ENCODE measurements at regions of chr16 and their contacts with region 1.

Region 1: DNA sequence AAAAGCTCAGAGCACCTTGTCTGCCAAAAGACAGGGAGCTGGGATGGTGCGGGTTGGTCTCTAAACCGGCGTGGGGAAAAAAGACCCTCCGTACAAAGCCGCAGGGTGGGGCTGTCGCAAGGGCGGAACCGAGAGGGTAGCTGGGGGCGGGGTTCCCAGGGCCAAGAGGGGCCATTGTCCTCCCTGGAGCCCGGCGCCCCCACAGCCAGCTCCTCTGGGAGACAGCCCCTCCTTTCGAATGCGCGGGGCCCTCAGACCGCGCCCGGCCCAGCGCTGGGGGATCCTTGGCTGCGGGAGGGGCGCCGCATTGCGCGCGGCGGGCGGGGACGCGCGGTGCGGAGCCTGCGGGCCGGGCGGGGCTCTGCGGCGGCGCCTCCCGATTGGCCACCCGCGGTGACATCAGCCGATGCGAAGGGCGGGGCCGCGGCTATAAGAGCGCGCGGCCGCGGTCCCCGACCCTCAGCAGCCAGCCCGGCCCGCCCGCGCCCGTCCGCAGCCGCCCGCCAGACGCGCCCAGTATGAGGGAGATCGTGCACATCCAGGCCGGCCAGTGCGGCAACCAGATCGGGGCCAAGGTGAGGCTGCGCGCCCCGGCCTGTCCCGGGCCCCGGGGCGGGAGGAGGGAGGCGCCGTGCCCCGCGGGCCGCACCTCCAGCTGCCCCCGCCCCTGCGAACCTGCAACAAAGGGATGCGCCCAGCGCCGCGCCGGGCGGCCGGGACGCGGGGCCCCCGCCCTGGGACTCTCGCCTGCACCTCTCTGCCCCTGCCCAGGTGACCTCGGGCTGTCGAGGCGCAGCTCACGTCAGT is at the start of gene TUBB3:
- DNase-seq: peak; percentile 92
- H3K4me3 Mint-ChIP-seq: peak within 1 kb of the TSS; percentile 83
- H3K27ac Mint-ChIP-seq: peak within 1 kb of the TSS; percentile 10
- H3K4me1 Mint-ChIP-seq: peaks cover 25% of the 10 kb centered on the region
- H3K27me3 Mint-ChIP-seq: peaks cover 19% of the 10 kb centered on the region
- total RNA-seq, gene TUBB3: 2.2 and 2.6 TPM in 2 replicates

Region 2: DNA sequence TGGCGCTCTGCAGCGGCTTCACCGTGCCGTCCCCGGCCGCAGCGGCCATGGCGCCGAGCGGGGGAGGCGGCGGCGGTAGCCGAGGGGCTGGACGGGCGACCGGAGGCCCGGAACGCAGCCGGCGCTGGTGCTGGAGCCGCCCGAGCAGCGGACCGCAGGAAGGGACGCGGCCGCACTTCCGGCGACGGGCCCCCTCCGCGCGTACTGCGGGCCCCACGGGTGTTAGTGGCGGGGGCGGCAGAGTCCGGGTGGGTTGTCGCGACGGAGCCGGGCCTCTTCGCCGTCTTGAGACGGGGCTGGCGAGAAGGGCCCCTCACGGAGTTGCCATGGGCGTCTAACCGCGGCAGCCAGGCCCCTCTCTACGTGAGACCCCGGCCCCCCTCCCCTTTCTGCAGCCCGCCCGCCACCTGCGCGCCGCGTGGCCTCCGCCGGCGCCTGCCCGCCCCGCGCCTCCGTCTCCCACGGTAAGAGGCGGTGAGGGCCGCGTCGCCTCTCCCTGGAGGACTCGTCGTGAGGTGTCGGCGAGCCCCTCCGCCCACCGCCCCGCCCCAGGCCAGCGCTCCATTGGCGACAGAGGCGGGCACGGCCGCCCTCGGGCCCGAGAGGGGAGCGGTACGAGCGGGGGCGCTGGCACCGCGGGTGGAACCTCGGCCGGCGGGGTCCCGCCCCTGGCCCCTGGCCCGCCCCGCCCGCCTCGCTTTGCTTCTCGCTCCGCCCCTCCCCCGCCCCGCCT is 202.1 kb before region 1 on chr16 and contains the starts of genes VPS9D1 and ZNF276:
- intact Hi-C with region 1: loop called (anchors 5 kb)
- DNase-seq: peak; percentile 94
- H3K4me3 Mint-ChIP-seq: peak within 1 kb of the TSS; percentile 90
- H3K27ac Mint-ChIP-seq: peak within 1 kb of the TSS; percentile 92
- H3K4me1 Mint-ChIP-seq: peaks cover 37% of the 10 kb centered on the region
- H3K27me3 Mint-ChIP-seq: no peaks in the 10 kb centered on the region
- total RNA-seq, gene VPS9D1: 3.6 and 3.9 TPM in 2 replicates
- total RNA-seq, gene ZNF276: 32.9 and 33.3 TPM in 2 replicates

Region 3: DNA sequence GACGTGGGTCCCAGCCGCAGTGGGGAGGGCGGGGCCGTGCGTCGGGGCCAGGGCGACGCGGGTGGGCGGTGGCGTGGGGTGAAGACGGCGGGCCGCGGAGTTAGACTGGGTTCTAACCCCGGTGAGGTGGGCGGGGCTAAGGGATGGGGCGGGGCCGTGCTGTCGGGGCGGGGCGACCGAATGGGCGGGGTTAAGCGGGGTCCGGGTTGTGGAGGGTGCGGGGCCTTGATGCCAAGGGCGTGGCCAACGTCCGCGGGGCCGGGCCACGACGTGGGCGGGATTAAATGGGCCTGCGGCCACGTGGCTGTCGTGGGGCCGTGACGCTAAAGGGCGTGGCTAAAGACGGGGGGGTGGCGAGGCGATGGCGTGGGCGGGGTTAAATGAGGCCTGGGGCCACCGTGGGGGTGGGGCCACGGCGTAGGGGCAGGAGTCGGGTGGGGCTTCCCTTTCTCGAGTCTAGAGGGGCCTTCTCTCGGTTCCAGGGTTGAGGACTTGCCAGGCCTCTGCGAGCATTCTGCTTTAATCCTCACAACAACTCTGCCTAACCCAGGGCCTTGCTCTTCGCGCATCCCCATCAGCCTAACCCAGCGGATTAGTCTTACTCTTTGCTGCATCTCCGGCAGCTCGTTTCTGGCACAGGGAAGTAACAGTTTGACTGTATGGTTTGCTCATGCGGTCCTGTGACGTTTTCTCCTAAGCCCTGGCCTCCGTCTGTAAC is 49.0 kb before region 1 on chr16:
- intact Hi-C with region 1: loop called (anchors 5 kb)
- DNase-seq: peak; percentile 97
- H3K4me3 Mint-ChIP-seq: peak overlapping the region; percentile 92
- H3K27ac Mint-ChIP-seq: peak overlapping the region; percentile 98
- H3K4me1 Mint-ChIP-seq: peaks cover 13% of the 10 kb centered on the region
- H3K27me3 Mint-ChIP-seq: no peaks in the 10 kb centered on the region

Region 4: DNA sequence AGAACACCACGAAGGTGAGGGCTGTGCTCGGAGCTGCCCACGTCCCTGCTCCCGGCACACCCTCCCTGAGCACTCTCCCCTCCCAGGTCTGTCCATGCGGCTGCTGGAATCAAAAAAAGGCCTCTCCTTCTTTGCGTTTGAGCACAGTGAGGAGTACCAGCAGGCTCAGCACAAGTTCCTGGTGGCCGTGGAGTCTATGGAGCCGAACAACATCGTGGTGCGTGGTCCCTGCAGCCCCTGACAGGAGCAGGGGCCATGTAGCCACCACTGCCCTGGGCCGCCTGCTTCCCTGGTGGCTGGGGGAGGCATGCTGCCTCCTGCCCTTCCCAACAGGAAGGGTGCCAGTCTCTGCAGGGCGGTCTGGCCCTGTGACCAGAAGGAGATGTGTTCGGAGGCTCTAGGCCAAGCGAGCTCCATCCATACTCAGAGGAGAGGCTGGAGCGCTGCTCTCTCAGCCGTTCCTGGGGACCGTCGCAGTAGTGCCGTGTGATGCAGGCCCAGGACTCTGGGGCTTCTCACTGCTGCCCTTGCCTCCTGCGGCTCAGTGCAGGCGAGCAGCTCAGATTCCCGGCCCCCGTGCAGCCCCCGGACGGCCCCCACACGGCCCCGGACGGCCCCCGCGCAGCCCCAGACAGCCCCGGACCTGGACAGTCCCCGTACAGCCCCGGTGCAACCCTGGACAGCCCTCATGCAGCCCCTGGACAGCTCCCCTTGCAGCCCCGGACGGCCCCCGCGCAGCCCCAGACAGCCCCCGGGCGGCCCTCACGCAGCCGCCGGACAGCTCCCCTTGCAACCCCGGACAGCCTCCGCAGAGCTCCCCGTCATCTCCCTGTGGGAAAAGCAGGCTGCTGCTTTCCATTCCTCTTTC is 29.2 kb before region 1 on chr16:
- intact Hi-C with region 1: no loop called
- DNase-seq: no peak
- H3K4me3 Mint-ChIP-seq: no peak overlapping the region
- H3K27ac Mint-ChIP-seq: no peak overlapping the region
- H3K4me1 Mint-ChIP-seq: peaks cover 8% of the 10 kb centered on the region
- H3K27me3 Mint-ChIP-seq: no peaks in the 10 kb centered on the region

Region 5: GRCh38 chr16:89945670-89946069 is 22.6 kb after region 1 on chr16:
- intact Hi-C with region 1: loop called (anchors 1 kb)
- DNase-seq: no peak
- H3K4me3 Mint-ChIP-seq: no peak overlapping the region
- H3K27ac Mint-ChIP-seq: no peak overlapping the region
- H3K4me1 Mint-ChIP-seq: peaks cover 7% of the 10 kb centered on the region
- H3K27me3 Mint-ChIP-seq: peaks cover 35% of the 10 kb centered on the region

Region 6: DNA sequence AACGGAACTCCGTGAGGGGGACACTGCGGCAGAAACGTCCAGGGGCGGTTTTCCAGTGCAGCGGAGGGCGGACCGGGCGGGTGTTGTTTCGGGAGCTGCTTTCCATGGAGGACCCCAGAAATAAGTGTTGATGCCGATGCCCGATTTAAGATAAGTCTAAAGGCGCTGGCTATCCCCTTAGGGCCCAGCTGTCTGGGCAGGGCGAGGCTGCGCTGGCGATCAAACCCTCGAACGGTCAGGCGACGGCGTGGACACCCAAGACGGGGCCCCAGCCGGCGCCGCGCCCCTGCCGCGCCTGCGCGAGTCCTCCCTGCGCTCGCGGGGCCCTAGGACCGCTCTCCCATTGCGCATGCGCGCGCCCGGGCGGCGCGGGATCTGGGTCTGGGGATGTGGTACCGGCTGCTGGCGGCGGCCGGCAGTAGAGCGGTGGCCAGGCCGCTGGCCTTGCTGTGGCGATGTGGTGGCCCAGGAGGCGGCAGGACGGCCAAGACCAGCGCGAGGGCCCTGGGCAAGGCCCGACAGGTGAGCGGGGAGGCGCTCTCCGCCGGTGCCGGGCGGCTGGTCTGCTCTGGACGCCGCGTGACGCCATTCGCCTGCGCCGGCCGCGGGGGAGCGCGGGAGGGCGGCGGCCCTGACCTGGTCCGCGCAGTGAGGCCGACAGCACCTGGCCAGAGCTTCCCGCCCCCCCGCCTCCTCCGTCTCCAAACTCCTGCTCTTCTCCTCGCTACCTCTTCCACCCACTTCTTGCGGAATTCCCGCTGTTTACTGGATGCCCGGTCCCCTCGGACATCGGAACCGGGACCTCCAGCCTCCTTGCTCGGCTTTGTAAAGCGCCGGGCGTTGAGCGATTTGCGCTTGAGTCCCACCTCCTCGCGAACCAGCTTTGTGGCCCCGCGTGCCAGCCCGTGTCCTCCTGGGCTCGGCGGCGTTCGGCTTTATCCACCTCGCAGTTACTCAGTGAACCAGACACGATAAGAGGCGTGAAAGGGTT is 49.5 kb after region 1 on chr16:
- intact Hi-C with region 1: loop called (anchors 1 kb)
- DNase-seq: peak; percentile 98
- H3K4me3 Mint-ChIP-seq: peak overlapping the region; percentile 100
- H3K27ac Mint-ChIP-seq: peak overlapping the region; percentile 97
- H3K4me1 Mint-ChIP-seq: peaks cover 18% of the 10 kb centered on the region
- H3K27me3 Mint-ChIP-seq: peaks cover 2% of the 10 kb centered on the region

Measured in activated CD4-positive, alpha-beta T cell treated with anti-CD3 and anti-CD28 coated beads, Interleukin-2, amount 10 ng/mL, durations not matched to agents 24 days and 14 days (primary cell).